BJ (cell line): ENCODE measurements at regions of chr11 and their contacts with region 1.

Region 1: DNA sequence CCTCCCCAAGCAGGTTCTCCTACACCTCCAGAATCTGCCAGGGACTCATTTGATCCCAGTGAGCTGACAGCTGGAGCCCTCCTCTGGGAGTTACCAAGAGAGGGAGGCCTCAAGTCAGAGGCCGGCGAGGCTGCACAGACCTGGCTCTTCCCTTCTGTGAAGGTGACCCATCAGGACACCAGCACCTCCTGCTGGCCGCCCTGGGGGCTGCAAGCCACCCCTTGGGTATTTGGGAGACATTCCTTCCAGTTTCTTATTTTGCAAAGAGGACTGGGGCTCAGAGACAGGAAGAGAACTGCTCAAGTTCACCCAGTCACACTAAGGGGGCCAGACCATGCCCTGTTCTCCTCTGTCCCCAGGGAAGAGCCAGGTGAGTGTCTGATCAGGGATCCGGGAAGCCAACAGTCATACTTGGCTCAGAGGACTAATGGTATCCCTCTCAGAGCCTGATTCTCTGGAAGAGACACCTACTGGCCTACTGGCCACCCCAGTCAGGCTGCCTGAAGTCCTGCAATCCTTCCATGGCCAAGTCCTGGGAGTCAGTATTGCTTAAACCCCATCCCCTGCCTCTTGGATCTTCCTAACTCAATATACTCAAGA is 40.5 kb upstream of the RIC3 start:
- DNase-seq: no peak
- H3K4me3 ChIP-seq: no peak overlapping the region
- H3K27me3 ChIP-seq: peaks cover 2% of the 10 kb centered on the region; the same call in 1 of the 2 replicates
- CTCF ChIP-seq: peak; percentile 29; the same call in 1 of the 2 replicates

Region 2: GRCh38 chr11:8168485-8169257 is 40.6 kb before region 1 on chr11 and contains the start of gene RIC3:
- CTCF ChIA-PET with region 1: no interaction called
- POLR2A ChIA-PET with region 1: no interaction called
- DNase-seq: no peak
- H3K4me3 ChIP-seq: no peak within 1 kb of the TSS
- H3K27me3 ChIP-seq: peaks cover 12% of the 10 kb centered on the region
- CTCF ChIP-seq: no peak
- polyA plus RNA-seq, gene RIC3: not detected in 2 replicates

Region 3: GRCh38 chr11:8192016-8192895 is 17.1 kb before region 1 on chr11:
- CTCF ChIA-PET with region 1: interaction called, 11 read pairs
- POLR2A ChIA-PET with region 1: no interaction called
- DNase-seq: peak; percentile 3
- H3K4me3 ChIP-seq: no peak overlapping the region
- H3K27me3 ChIP-seq: peaks cover 3% of the 10 kb centered on the region; the same call in 1 of the 2 replicates
- CTCF ChIP-seq: peak; percentile 93